Activated CD8-positive, alpha-beta T cell treated with anti-CD3 and anti-CD28 coated beads, Interleukin-2, amount 10 ng/mL, durations not matched to agents 7 days and 5 days (primary cell): ENCODE measurements at regions of chr21 and their contacts with region 1.

Region 1: GRCh38 chr21:34888569-34889319 is 160.4 kb downstream of the RUNX1 start:
- DNase-seq: peak; percentile 78
- ATAC-seq: peak; percentile 64
- H3K4me3 Mint-ChIP-seq: peak overlapping the region; percentile 86
- H3K27ac Mint-ChIP-seq: peak overlapping the region; percentile 92
- H3K4me1 Mint-ChIP-seq: peaks cover 45% of the 10 kb centered on the region
- H3K27me3 Mint-ChIP-seq: peaks cover 6% of the 10 kb centered on the region

Region 2: GRCh38 chr21:34822942-34823341 is 65.8 kb before region 1 on chr21:
- CTCF ChIA-PET with region 1: no interaction called
- POLR2A ChIA-PET with region 1: no interaction called
- DNase-seq: no peak
- ATAC-seq: no peak
- H3K4me3 Mint-ChIP-seq: no peak overlapping the region
- H3K27ac Mint-ChIP-seq: no peak overlapping the region
- H3K4me1 Mint-ChIP-seq: peaks cover 6% of the 10 kb centered on the region
- H3K27me3 Mint-ChIP-seq: no peaks in the 10 kb centered on the region

Region 3: GRCh38 chr21:34933609-34934335 is 45.0 kb after region 1 on chr21:
- CTCF ChIA-PET with region 1: interaction called, 19 read pairs
- POLR2A ChIA-PET with region 1: interaction called, 6 read pairs
- DNase-seq: peak; percentile 49
- ATAC-seq: peak; percentile 92
- H3K4me3 Mint-ChIP-seq: peak overlapping the region; percentile 73
- H3K27ac Mint-ChIP-seq: peak overlapping the region; percentile 93
- H3K4me1 Mint-ChIP-seq: peaks cover 59% of the 10 kb centered on the region
- H3K27me3 Mint-ChIP-seq: no peaks in the 10 kb centered on the region

Region 4: DNA sequence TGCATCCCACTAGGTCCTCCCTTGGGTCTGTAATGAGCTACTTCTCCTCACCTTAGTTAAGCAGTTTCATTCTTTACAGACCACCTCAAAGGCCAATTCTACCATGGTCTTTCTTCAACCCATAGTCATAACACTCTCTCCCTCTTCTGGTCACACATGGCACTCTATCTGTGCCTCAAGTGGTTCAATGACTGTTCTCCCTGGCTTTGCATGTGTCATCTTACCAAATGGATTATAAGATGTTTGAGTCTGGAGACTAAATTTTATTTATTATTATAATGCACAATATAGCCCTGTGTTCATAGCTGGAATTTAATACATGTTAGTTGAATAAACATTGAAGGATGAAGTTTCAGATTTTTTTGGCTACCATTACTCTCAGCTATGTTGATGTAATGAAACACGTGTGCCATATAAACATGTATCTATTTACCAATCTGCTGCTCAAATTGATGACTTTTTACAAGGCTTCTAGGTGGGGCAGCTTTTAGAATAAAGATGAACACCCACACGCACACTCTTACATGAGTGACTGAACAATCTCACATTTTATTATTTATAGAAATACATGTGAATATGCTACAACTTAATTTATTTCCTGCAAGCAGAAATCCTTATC is 58.3 kb after region 1 on chr21:
- CTCF ChIA-PET with region 1: interaction called, 13 read pairs
- POLR2A ChIA-PET with region 1: no interaction called
- DNase-seq: no peak
- ATAC-seq: no peak
- H3K4me3 Mint-ChIP-seq: no peak overlapping the region
- H3K27ac Mint-ChIP-seq: no peak overlapping the region
- H3K4me1 Mint-ChIP-seq: peaks cover 40% of the 10 kb centered on the region
- H3K27me3 Mint-ChIP-seq: peaks cover under 1% of the 10 kb centered on the region

Region 5: DNA sequence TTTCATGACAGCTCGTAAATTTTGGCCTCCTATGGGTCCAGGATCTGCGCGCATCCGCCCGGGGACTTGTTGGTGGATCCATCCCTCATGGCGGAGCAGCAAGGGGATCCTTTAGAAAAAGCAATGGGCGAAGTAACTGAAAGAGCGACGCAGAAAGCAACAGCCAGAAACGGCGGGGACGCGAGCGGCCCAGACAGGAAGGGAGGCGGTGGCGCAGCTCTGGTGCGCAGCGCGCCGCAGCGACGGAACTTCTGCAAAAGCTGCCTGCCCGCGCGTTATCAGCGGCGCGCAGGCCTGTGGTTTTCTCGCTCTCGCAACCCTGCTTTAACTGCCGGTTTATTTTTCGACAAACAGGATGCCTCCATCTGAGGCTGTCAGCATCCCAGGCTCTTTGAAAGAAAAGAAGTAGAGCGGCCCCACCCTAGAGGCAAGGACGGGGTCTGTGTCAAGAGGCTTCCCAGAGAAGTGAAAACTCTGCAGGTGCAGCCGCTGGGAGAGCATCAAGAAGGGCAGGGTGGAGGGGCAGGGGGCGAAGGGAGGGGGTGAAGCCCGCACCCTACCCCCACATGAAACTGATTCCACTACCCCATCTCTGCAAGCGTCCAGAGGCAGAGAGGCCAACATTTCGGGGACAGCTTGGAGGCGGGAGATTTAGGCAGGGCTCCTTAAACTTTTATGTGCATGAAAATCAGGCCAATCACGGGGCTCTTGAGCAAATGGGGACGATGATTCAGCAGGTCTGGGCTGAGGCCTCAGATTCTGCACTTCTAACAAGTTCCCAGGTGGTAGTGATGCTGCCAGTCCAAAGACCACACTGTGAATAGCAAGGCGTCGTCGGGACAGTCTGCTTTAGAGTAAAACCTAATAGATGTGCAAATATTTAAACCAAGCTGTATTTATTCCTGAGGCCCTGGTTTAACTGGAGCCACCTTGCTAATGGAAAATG is 138.1 kb after region 1 on chr21:
- CTCF ChIA-PET with region 1: interaction called, 39 read pairs
- POLR2A ChIA-PET with region 1: interaction called, 8 read pairs
- DNase-seq: peak; percentile 91
- ATAC-seq: peak; percentile 93
- H3K4me3 Mint-ChIP-seq: peak overlapping the region; percentile 79
- H3K27ac Mint-ChIP-seq: peak overlapping the region; percentile 99
- H3K4me1 Mint-ChIP-seq: peaks cover 63% of the 10 kb centered on the region
- H3K27me3 Mint-ChIP-seq: peaks cover 3% of the 10 kb centered on the region

Region 6: DNA sequence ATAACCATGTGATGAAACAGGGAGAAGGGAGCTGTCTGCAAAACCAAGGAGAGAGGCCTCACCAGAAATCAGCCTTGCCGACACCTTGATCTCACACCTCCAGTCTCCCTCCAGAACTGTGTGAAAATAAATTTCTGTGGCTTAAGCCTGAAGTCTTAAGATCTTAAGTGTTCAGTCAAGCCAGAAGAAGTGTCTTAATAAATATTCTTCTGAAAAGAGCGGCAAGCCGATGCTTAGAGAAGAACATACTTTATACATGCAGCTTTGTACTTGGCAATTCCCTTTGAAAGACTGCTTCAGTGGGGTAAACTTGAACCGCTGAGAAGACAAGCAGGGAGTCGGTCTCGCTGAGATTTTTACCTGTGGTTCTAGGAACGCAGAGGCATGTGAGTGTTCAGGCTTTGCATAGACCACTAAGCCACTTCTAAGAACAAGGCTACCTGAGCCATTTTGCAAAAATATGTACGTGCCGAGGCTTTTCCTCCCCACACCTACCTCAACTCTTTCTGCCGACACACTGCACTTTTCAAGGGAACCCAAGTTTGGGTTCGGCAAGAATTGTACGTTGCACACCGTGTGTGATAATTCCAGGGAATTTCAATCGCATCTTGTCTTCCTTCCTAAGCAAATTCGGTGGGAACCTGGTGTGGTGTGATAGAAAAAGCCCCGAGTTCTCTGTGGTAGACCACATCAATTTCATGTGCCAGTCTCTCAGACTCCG is 157.0 kb after region 1 on chr21:
- CTCF ChIA-PET with region 1: interaction called, 106 read pairs
- POLR2A ChIA-PET with region 1: interaction called, 24 read pairs
- DNase-seq: peak; percentile 65
- ATAC-seq: peak; percentile 17
- H3K4me3 Mint-ChIP-seq: peak overlapping the region; percentile 82
- H3K27ac Mint-ChIP-seq: peak overlapping the region; percentile 90
- H3K4me1 Mint-ChIP-seq: peaks cover 98% of the 10 kb centered on the region
- H3K27me3 Mint-ChIP-seq: peaks cover 17% of the 10 kb centered on the region

Region 7: GRCh38 chr21:35051287-35051818 is 162.6 kb after region 1 on chr21:
- CTCF ChIA-PET with region 1: interaction called, 106 read pairs
- POLR2A ChIA-PET with region 1: interaction called, 24 read pairs
- DNase-seq: peak; percentile 88
- ATAC-seq: peak; percentile 57
- H3K4me3 Mint-ChIP-seq: peak overlapping the region; percentile 30
- H3K27ac Mint-ChIP-seq: peak overlapping the region; percentile 66
- H3K4me1 Mint-ChIP-seq: peaks cover 54% of the 10 kb centered on the region
- H3K27me3 Mint-ChIP-seq: peaks cover 10% of the 10 kb centered on the region

Region 8: GRCh38 chr21:35400233-35400957 is 511.7 kb after region 1 on chr21:
- CTCF ChIA-PET with region 1: interaction called, 28 read pairs
- POLR2A ChIA-PET with region 1: no interaction called
- DNase-seq: peak; percentile 58
- ATAC-seq: peak; percentile 81
- H3K4me3 Mint-ChIP-seq: no peak overlapping the region
- H3K27ac Mint-ChIP-seq: no peak overlapping the region
- H3K4me1 Mint-ChIP-seq: peaks cover 4% of the 10 kb centered on the region
- H3K27me3 Mint-ChIP-seq: peaks cover 9% of the 10 kb centered on the region